Activated CD8-positive, alpha-beta T cell treated with anti-CD3 and anti-CD28 coated beads for 36 hours (primary cell): ENCODE measurements at regions of chr4 and their contacts with region 1.

Region 1: GRCh38 chr4:38856524-38857337 is at the start of gene TLR6:
- DNase-seq: peak; percentile 87
- ATAC-seq: peak; percentile 64
- H3K4me3 Mint-ChIP-seq: peak within 1 kb of the TSS; percentile 79
- H3K27ac Mint-ChIP-seq: peak within 1 kb of the TSS; percentile 80
- H3K4me1 Mint-ChIP-seq: peaks cover 28% of the 10 kb centered on the region
- H3K27me3 Mint-ChIP-seq: peaks cover 2% of the 10 kb centered on the region
- CTCF ChIP-seq: peak; percentile 87
- total RNA-seq, gene TLR6: 1.6 to 2.0 TPM

Region 2: GRCh38 chr4:38455092-38455862 is 401.5 kb before region 1 on chr4:
- CTCF ChIA-PET with region 1: no interaction called
- POLR2A ChIA-PET with region 1: no interaction called
- intact Hi-C with region 1: no loop called
- DNase-seq: no peak
- ATAC-seq: peak; percentile 59
- H3K4me3 Mint-ChIP-seq: peak overlapping the region; percentile 9
- H3K27ac Mint-ChIP-seq: peak overlapping the region; percentile 5
- H3K4me1 Mint-ChIP-seq: peaks cover 44% of the 10 kb centered on the region
- H3K27me3 Mint-ChIP-seq: no peaks in the 10 kb centered on the region
- CTCF ChIP-seq: no peak

Region 3: GRCh38 chr4:38654273-38654672 is 202.5 kb before region 1 on chr4:
- CTCF ChIA-PET with region 1: no interaction called
- POLR2A ChIA-PET with region 1: no interaction called
- intact Hi-C with region 1: no loop called
- DNase-seq: no peak
- ATAC-seq: peak; percentile 75
- H3K4me3 Mint-ChIP-seq: peak overlapping the region; percentile 40
- H3K27ac Mint-ChIP-seq: peak overlapping the region; percentile 91
- H3K4me1 Mint-ChIP-seq: peaks cover 38% of the 10 kb centered on the region
- H3K27me3 Mint-ChIP-seq: no peaks in the 10 kb centered on the region
- CTCF ChIP-seq: no peak

Region 4: DNA sequence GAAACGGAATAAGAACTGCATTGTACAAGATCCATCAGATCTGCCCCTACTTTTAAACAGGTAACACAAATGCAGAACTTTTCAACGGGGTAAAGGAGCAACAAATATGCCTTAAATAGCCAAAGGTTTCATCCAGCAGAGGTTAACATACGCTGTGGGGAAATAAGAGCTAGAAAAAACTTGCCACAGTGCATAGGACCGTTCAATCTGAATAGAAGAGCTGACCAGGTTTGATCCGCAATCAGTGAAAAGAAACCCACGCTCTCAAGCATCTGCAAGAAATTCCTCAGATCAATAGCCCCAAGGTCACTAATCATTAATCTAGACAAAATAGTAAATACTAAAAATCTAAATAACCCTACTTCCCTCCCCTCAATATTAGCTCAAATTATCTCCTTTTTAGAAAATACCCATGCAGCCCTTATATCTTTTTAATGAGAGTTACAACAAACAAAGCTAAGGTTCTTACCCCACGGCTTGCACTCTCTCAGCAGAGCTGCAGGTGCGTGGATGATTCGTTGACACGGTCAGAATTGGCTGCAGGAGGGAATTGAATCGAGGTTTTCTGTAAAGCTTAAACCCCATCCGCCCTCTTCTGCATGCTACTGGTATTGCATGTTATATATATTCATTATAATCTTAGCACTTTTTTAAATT is 74.2 kb before region 1 on chr4 and contains the start of gene TLR10:
- CTCF ChIA-PET with region 1: interaction called, 29 read pairs
- POLR2A ChIA-PET with region 1: no interaction called
- intact Hi-C with region 1: no loop called
- DNase-seq: peak; percentile 57
- ATAC-seq: peak; percentile 92
- H3K4me3 Mint-ChIP-seq: no peak within 1 kb of the TSS
- H3K27ac Mint-ChIP-seq: no peak within 1 kb of the TSS
- H3K4me1 Mint-ChIP-seq: peaks cover 4% of the 10 kb centered on the region
- H3K27me3 Mint-ChIP-seq: no peaks in the 10 kb centered on the region
- CTCF ChIP-seq: peak; percentile 76
- total RNA-seq, gene TLR10: 0.11 to 0.22 TPM

Region 5: GRCh38 chr4:38818441-38818976 is 38.2 kb before region 1 on chr4:
- CTCF ChIA-PET with region 1: interaction called, 10 read pairs
- POLR2A ChIA-PET with region 1: no interaction called
- intact Hi-C with region 1: no loop called
- DNase-seq: no peak
- ATAC-seq: no peak
- H3K4me3 Mint-ChIP-seq: no peak overlapping the region
- H3K27ac Mint-ChIP-seq: no peak overlapping the region
- H3K4me1 Mint-ChIP-seq: peaks cover 13% of the 10 kb centered on the region
- H3K27me3 Mint-ChIP-seq: no peaks in the 10 kb centered on the region
- CTCF ChIP-seq: no peak

Region 6: DNA sequence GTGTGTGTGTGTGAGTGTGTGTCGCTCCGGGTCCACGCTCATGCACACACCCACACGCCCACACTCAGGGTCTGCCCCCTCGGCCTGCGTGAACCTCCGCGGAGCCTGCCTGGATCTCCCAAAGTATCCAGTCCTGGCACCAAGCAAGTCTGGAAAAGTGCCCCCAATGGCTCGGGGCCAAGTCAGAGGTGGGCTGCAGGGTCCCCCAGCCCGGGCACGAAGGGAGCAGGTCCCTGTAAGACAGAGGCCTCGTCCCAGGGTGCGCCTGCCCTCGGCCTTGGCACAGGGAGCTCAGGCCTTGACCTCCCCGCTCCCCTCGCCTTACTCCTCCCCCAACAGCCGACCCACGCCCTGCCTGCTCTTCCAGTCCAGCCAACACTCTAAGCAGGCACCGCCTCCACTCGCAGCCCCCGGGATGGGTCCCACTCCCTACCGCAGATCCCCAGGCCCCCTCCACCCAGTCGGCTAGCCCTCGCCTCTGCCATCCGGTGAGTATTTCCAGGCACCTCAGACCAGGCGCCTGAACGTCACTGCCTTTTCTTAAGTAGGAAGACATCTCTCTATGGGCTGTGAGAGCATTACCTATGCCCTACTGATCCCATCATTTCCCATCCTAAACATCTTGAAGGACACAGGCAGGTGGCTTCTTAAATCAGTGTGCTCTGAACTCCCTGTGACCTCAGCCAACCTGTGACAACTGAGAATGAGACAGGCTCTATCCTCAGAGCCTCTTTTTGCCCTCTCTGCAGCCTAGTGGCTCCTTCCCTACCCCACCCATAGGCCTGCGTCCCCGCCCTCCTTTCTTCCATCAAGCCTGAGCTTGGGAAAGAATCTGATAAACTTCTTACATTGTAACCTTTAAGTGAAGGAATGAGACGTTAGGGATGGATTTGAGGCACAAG is 11.6 kb after region 1 on chr4:
- CTCF ChIA-PET with region 1: interaction called, 47 read pairs
- POLR2A ChIA-PET with region 1: interaction called, 3 read pairs
- intact Hi-C with region 1: no loop called
- DNase-seq: no peak
- ATAC-seq: no peak
- H3K4me3 Mint-ChIP-seq: peak overlapping the region; percentile 47
- H3K27ac Mint-ChIP-seq: no peak overlapping the region
- H3K4me1 Mint-ChIP-seq: peaks cover 13% of the 10 kb centered on the region
- H3K27me3 Mint-ChIP-seq: peaks cover 20% of the 10 kb centered on the region
- CTCF ChIP-seq: no peak

Region 7: GRCh38 chr4:38889143-38889542 is 32.4 kb after region 1 on chr4:
- CTCF ChIA-PET with region 1: interaction called, 34 read pairs
- POLR2A ChIA-PET with region 1: no interaction called
- intact Hi-C with region 1: no loop called
- DNase-seq: no peak
- ATAC-seq: peak; percentile 70
- H3K4me3 Mint-ChIP-seq: peak overlapping the region; percentile 40
- H3K27ac Mint-ChIP-seq: peak overlapping the region; percentile 91
- H3K4me1 Mint-ChIP-seq: peaks cover 25% of the 10 kb centered on the region
- H3K27me3 Mint-ChIP-seq: no peaks in the 10 kb centered on the region
- CTCF ChIP-seq: no peak

Region 8: GRCh38 chr4:38979511-38980230 is 122.9 kb after region 1 on chr4:
- CTCF ChIA-PET with region 1: no interaction called
- POLR2A ChIA-PET with region 1: no interaction called
- intact Hi-C with region 1: no loop called
- DNase-seq: no peak
- ATAC-seq: no peak
- H3K4me3 Mint-ChIP-seq: no peak overlapping the region
- H3K27ac Mint-ChIP-seq: peak overlapping the region; percentile 74
- H3K4me1 Mint-ChIP-seq: peaks cover 39% of the 10 kb centered on the region
- H3K27me3 Mint-ChIP-seq: no peaks in the 10 kb centered on the region
- CTCF ChIP-seq: no peak